ENCODE measurements at regions of chr10 and their contacts with region 1.

Region 1: GRCh38 chr10:13776861-13777311 is 190.1 kb downstream of the PRPF18 start:
- DNase-seq: no peak
- ATAC-seq: no peak

Region 2: GRCh38 chr10:13613519-13613918 is 163.4 kb before region 1 on chr10:
- intact Hi-C with region 1: loop called in 1 of 2 experiments (anchors 10 kb)
- DNase-seq: no peak
- ATAC-seq: no peak

Region 3: GRCh38 chr10:13659897-13660550 is 116.9 kb before region 1 on chr10:
- intact Hi-C with region 1: loop called (anchors 2 to 10 kb)
- DNase-seq: peak; percentile 42 to 67
- ATAC-seq: peak; percentile 59